ENCODE measurements at regions of chr18 and their contacts with region 1.

Region 1: GRCh38 chr18:59907172-59907571 is 7.4 kb downstream of the PMAIP1 start:
- DNase-seq: peak; percentile 16
- ATAC-seq: no peak
- H3K4me3 Mint-ChIP-seq: no peak overlapping the region
- H3K27ac Mint-ChIP-seq: peak overlapping the region; percentile 71
- H3K4me1 Mint-ChIP-seq: peaks cover 58% of the 10 kb centered on the region
- H3K27me3 Mint-ChIP-seq: no peaks in the 10 kb centered on the region
- CTCF ChIP-seq: no peak

Region 2: DNA sequence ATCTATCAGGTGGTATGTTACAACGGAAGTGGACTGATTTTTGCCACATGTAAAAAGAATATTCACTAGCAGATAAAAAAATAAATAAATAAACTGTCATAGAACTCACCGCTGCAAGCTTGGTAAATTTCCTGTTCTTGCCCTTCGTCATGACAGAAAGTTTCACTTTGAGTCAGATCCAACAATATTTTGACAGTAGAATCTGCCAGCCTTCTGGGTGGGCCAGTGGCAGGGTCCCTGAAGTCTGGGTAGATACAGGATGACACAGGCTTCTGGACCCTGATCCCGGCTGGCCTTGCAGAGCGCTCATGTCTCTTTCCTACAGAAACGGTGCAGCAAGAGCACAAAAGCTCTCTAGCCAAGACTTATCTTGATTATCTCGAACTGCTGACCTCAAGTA is 105.1 kb before region 1 on chr18:
- CTCF ChIA-PET with region 1: no interaction called
- POLR2A ChIA-PET with region 1: no interaction called
- intact Hi-C with region 1: no loop called
- DNase-seq: peak; percentile 15
- ATAC-seq: peak; percentile 49
- H3K4me3 Mint-ChIP-seq: no peak overlapping the region
- H3K27ac Mint-ChIP-seq: no peak overlapping the region
- H3K4me1 Mint-ChIP-seq: peaks cover 6% of the 10 kb centered on the region
- H3K27me3 Mint-ChIP-seq: peaks cover 2% of the 10 kb centered on the region
- CTCF ChIP-seq: no peak

Region 3: DNA sequence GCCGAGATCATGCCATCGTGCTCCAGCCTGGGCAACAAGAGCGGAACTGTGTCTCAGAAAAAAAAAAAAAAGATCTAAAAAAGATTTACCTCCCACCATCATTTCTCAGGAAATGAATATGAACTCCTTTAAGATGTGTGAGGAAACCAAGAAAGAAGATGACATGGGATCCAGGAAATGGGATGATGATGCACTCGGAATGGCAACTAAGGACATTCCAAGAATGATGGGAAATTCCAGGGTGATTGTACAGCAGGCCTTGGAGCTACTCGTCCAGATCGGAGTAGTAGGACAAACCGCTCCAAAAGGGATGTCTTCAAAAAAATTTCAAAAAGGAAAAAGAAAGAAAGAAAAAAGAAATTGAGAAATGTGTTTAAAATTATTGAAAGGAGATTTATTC is 92.3 kb before region 1 on chr18:
- CTCF ChIA-PET with region 1: no interaction called
- POLR2A ChIA-PET with region 1: no interaction called
- intact Hi-C with region 1: no loop called
- DNase-seq: no peak
- ATAC-seq: no peak
- H3K4me3 Mint-ChIP-seq: no peak overlapping the region
- H3K27ac Mint-ChIP-seq: no peak overlapping the region
- H3K4me1 Mint-ChIP-seq: no peaks in the 10 kb centered on the region
- H3K27me3 Mint-ChIP-seq: peaks cover 16% of the 10 kb centered on the region
- CTCF ChIP-seq: no peak

Region 4: GRCh38 chr18:59950215-59950944 is 43.2 kb after region 1 on chr18:
- CTCF ChIA-PET with region 1: no interaction called
- POLR2A ChIA-PET with region 1: interaction called, 5 read pairs
- intact Hi-C with region 1: loop called (anchors 5 kb)
- DNase-seq: peak; percentile 17
- ATAC-seq: peak; percentile 14
- H3K4me3 Mint-ChIP-seq: no peak overlapping the region
- H3K27ac Mint-ChIP-seq: no peak overlapping the region
- H3K4me1 Mint-ChIP-seq: peaks cover 18% of the 10 kb centered on the region
- H3K27me3 Mint-ChIP-seq: peaks cover 3% of the 10 kb centered on the region
- CTCF ChIP-seq: no peak

Region 5: DNA sequence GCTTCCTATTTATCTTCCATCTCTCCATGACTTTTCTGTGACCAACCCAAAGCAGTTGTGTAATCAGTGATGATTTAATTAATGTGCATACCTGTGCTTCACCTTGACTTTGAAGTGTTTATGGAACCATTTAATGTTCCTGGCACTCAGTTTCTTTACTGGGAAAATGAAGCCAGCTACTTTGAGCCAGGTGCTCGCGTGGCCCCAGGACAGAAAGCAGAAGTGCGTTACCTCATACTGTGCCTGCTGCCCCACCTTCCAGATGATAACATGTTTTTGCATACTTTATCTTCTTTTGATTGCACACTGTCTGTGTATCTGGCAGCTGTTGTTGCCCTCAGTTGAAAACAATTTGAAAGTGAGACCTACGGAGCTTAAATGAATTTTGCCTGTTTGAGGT is 53.9 kb after region 1 on chr18:
- CTCF ChIA-PET with region 1: no interaction called
- POLR2A ChIA-PET with region 1: no interaction called
- intact Hi-C with region 1: no loop called
- DNase-seq: no peak
- ATAC-seq: no peak
- H3K4me3 Mint-ChIP-seq: no peak overlapping the region
- H3K27ac Mint-ChIP-seq: no peak overlapping the region
- H3K4me1 Mint-ChIP-seq: peaks cover 8% of the 10 kb centered on the region
- H3K27me3 Mint-ChIP-seq: peaks cover 13% of the 10 kb centered on the region
- CTCF ChIP-seq: no peak

Measured in activated CD8-positive, alpha-beta T cell treated with anti-CD3 and anti-CD28 coated beads for 36 hours (primary cell).